Right cardiac atrium (tissue), 5 donors: ENCODE measurements at regions of chr9 and their contacts with region 1.

Region 1: GRCh38 chr9:77224746-77225312 is 47.5 kb downstream of the VPS13A start:
- DNase-seq: no peak
- ATAC-seq: no peak
- H3K4me3 ChIP-seq: no peak overlapping the region
- H3K27ac ChIP-seq: no peak overlapping the region
- H3K4me1 ChIP-seq: no peaks in the 10 kb centered on the region
- H3K27me3 ChIP-seq: no peaks in the 10 kb centered on the region

Region 2: GRCh38 chr9:77177161-77177893 is 47.5 kb before region 1 on chr9 and contains the start of gene VPS13A:
- intact Hi-C with region 1: loop called in 1 of 4 experiments (anchors 10 kb)
- DNase-seq: peak; percentile 97 to 98 (median 97)
- ATAC-seq: peak; percentile 97
- H3K4me3 ChIP-seq: peak within 1 kb of the TSS; percentile 65
- H3K27ac ChIP-seq: peak within 1 kb of the TSS; percentile 71
- H3K4me1 ChIP-seq: no peaks in the 10 kb centered on the region
- H3K27me3 ChIP-seq: no peaks in the 10 kb centered on the region
- total RNA-seq, gene VPS13A: 39.8 to 47.2 (median 44.5) TPM

Region 3: GRCh38 chr9:77271023-77271690 is 46.3 kb after region 1 on chr9:
- intact Hi-C with region 1: loop called in 1 of 4 experiments (anchors 5 kb)
- DNase-seq: no peak
- ATAC-seq: no peak
- H3K4me3 ChIP-seq: no peak overlapping the region
- H3K27ac ChIP-seq: no peak overlapping the region
- H3K4me1 ChIP-seq: no peaks in the 10 kb centered on the region
- H3K27me3 ChIP-seq: no peaks in the 10 kb centered on the region

Region 4: DNA sequence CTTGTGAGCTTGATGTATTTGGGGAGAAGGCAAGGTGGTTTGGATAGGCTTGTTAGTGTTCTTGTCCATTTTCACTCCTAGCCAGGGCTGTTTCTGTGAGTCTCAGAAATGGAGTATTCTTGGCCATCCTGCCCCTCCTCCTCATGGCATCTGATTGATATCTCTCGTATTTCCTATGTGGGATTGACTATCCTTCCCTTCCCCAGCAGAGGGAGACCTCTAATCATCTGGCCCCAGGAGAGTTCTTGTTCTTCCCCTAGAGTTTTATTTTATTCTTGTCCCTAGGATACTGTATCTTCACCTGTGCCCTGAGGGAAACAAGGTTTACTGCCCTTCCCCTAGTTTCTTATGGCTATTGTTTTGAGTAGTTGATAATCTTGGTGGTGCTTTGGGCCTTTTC is 66.9 kb after region 1 on chr9:
- intact Hi-C with region 1: no loop called
- DNase-seq: no peak
- ATAC-seq: no peak
- H3K4me3 ChIP-seq: no peak overlapping the region
- H3K27ac ChIP-seq: no peak overlapping the region
- H3K4me1 ChIP-seq: no peaks in the 10 kb centered on the region
- H3K27me3 ChIP-seq: no peaks in the 10 kb centered on the region